ENCODE measurements at regions of chr19 and their contacts with region 1.

Region 1: DNA sequence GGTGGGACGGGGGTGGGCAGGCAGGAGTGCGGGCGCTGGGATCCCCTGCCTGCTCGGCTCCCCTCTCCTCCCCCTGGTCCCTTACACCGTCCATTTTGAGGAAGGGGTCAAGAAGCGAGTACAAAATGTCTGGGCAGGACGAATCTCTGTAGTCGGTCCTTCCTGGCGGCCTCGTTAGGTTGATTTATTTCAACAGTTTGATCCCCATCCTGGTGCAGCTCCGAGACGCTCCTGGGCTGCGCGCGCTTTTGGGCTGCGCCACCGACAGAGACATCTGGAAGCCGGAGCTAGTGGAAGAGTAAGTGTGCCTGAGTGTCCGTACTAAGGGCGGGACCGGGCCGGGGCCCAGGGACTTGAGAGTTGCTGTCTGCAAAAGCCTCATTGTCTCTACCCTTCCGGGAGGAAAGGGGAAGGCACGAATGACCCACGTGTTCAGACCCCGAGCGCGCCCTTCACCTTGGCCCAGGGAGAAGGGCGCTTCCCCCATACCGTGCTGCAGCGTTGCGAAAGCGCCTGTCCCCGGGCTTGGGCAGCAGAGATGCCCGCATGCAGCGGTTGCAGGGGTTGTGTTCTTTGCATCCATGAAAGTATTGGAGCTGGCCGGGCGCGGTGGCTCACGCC is 1.8 kb downstream of the ZNF114 start:
- DNase-seq: no peak
- H3K4me3 ChIP-seq: peak overlapping the region; percentile 58
- CTCF ChIP-seq: no peak

Region 2: GRCh38 chr19:48255376-48256303 is 16.0 kb before region 1 on chr19 and contains the start of gene CARD8:
- CTCF ChIA-PET with region 1: interaction called, 16 read pairs
- POLR2A ChIA-PET with region 1: no interaction called
- DNase-seq: no peak
- H3K4me3 ChIP-seq: peak within 1 kb of the TSS; percentile 84
- CTCF ChIP-seq: no peak

Region 3: DNA sequence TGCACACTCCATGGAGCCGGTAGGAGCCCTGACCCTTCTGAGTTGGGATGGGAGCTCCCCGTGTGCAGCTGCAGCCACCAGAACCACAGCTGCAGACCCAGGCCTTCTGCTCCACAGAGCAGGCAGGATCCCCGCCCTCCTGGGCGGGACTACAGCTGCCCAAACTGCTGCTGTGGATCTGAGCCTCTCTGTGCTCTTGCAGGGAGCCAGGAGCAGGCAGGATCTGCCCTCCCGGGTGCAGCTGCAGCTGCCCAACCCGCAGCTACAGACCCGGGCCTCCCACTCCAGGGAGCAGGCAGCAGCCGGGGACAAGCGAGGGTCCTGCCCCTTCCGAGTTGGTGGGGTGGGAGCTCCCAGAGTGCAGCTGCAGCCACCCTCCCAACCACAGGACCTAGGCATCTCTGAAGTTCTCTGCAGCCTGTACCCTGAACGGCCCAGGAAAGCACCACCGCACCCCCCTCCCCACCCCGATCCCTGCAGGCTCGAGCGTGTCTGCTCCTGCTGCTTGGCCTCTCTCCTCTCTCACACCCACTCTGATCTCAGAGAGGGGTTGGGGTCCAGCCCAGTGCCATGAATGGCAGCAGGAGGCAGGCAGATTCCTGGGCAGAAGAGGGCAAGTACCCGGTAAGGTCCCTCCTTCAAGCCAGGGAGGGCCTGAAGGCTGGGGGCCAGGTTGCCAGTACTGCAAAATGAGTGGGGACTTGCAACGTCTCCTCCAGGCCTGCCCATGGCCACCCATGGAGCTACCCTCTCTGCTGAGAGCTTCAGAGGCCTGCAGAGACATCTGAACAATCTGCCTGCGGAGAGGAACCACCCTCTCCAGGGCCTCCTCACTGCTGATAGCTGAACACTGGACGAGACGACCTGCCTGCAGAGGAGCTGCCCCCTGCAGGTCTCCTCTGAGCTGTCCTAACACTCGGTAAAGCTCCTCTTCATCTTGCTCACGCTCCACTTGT is 37.3 kb after region 1 on chr19:
- CTCF ChIA-PET with region 1: interaction called, 41 read pairs
- POLR2A ChIA-PET with region 1: interaction called, 3 read pairs
- DNase-seq: no peak
- H3K4me3 ChIP-seq: no peak overlapping the region
- CTCF ChIP-seq: peak; percentile 64